ENCODE measurements at regions of chr16 and their contacts with region 1.

Region 1: GRCh38 chr16:88619859-88620815 is 18.2 kb upstream of the IL17C start:
- DNase-seq: peak; percentile 78 to 94
- ATAC-seq: peak; percentile 80 to 92 (median 87)
- H3K4me3 ChIP-seq: no peak overlapping the region
- H3K4me3 Mint-ChIP-seq: peak overlapping the region; percentile 77
- H3K27ac ChIP-seq: peak overlapping the region; percentile 93
- H3K27ac Mint-ChIP-seq: peak overlapping the region; percentile 96 to 97
- H3K4me1 ChIP-seq: peaks cover 47% of the 10 kb centered on the region
- H3K4me1 Mint-ChIP-seq: peaks cover 29 to 50% of the 10 kb centered on the region in 2 donors
- H3K27me3 ChIP-seq: no peaks in the 10 kb centered on the region
- H3K27me3 Mint-ChIP-seq: no peaks in the 10 kb centered on the region
- CTCF ChIP-seq: no peak

Region 2: DNA sequence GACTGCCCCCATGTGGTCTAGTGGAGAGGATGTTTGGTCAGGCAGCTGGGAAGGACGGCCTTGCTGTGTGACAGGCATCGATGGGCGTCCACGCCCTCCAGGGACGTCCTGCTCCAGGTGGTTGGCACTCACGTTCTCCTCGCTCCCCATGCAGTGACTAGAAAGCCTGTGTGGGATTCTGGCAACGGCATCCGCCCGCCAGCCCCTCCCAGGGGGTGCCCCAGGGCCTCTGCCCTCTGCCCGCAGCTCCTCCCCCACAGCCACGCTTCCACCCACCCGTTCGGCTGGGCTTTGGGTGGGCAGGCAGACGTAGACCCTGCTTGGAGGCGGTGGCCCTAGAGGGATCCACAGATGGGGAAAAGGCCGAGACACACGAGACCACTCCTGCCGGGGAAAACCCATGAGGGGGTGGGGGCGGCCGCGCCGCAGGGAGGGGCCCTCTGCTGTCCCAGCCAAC is 13.6 kb after region 1 on chr16:
- intact Hi-C with region 1: loop called (anchors 1 kb)
- DNase-seq: peak in 1 of 2 donors; percentile 82
- ATAC-seq: peak; percentile 40 to 57 (median 54)
- H3K4me3 ChIP-seq: peak overlapping the region; percentile 71
- H3K4me3 Mint-ChIP-seq: peak overlapping the region; percentile 82
- H3K27ac ChIP-seq: peak overlapping the region; percentile 88
- H3K27ac Mint-ChIP-seq: peak overlapping the region; percentile 88 to 90
- H3K4me1 ChIP-seq: peaks cover 56% of the 10 kb centered on the region
- H3K4me1 Mint-ChIP-seq: peaks cover 19 to 42% of the 10 kb centered on the region in 2 donors
- H3K27me3 ChIP-seq: no peaks in the 10 kb centered on the region
- H3K27me3 Mint-ChIP-seq: peaks cover 0 to 3% of the 10 kb centered on the region in 2 donors
- CTCF ChIP-seq: no peak

Region 3: GRCh38 chr16:88639231-88640038 is 19.3 kb after region 1 on chr16:
- intact Hi-C with region 1: loop called (anchors 1 kb)
- DNase-seq: peak; percentile 37 to 40
- ATAC-seq: peak in 1 of 3 donors; percentile 7
- H3K4me3 ChIP-seq: no peak overlapping the region
- H3K4me3 Mint-ChIP-seq: peak overlapping the region; percentile 64
- H3K27ac ChIP-seq: no peak overlapping the region
- H3K27ac Mint-ChIP-seq: peak overlapping the region; percentile 72 to 90
- H3K4me1 ChIP-seq: peaks cover 80% of the 10 kb centered on the region
- H3K4me1 Mint-ChIP-seq: peaks cover 31 to 67% of the 10 kb centered on the region in 2 donors
- H3K27me3 ChIP-seq: no peaks in the 10 kb centered on the region
- H3K27me3 Mint-ChIP-seq: peaks cover 0 to 3% of the 10 kb centered on the region in 2 donors
- CTCF ChIP-seq: no peak

Region 4: GRCh38 chr16:88686439-88687253 is 66.5 kb after region 1 on chr16 and contains the start of gene SNAI3:
- intact Hi-C with region 1: loop called (anchors 1 kb)
- DNase-seq: peak; percentile 88 to 89
- ATAC-seq: peak; percentile 86 to 94 (median 93)
- H3K4me3 ChIP-seq: peak within 1 kb of the TSS; percentile 92
- H3K4me3 Mint-ChIP-seq: peak within 1 kb of the TSS; percentile 84
- H3K27ac ChIP-seq: peak within 1 kb of the TSS; percentile 63
- H3K27ac Mint-ChIP-seq: peak within 1 kb of the TSS; percentile 36 to 73
- H3K4me1 ChIP-seq: peaks cover 55% of the 10 kb centered on the region
- H3K4me1 Mint-ChIP-seq: peaks cover 15 to 45% of the 10 kb centered on the region in 2 donors
- H3K27me3 ChIP-seq: no peaks in the 10 kb centered on the region
- H3K27me3 Mint-ChIP-seq: no peaks in the 10 kb centered on the region
- CTCF ChIP-seq: no peak
- total RNA-seq, gene SNAI3: 8.2 to 9.2 (median 8.4) TPM

Region 5: GRCh38 chr16:88700636-88701482 is 80.7 kb after region 1 on chr16:
- intact Hi-C with region 1: loop called (anchors 1 kb)
- DNase-seq: peak; percentile 95 to 96
- ATAC-seq: peak; percentile 76 to 92 (median 82)
- H3K4me3 ChIP-seq: peak overlapping the region; percentile 67
- H3K4me3 Mint-ChIP-seq: peak overlapping the region; percentile 94
- H3K27ac ChIP-seq: peak overlapping the region; percentile 83
- H3K27ac Mint-ChIP-seq: peak overlapping the region; percentile 89 to 96
- H3K4me1 ChIP-seq: peaks cover 84% of the 10 kb centered on the region
- H3K4me1 Mint-ChIP-seq: peaks cover 53 to 70% of the 10 kb centered on the region in 2 donors
- H3K27me3 ChIP-seq: no peaks in the 10 kb centered on the region
- H3K27me3 Mint-ChIP-seq: no peaks in the 10 kb centered on the region
- CTCF ChIP-seq: no peak

Measured in natural killer cell (primary cell).